ENCODE measurements at regions of chr13 and their contacts with region 1.

Region 1: GRCh38 chr13:31236211-31236786 is 36.5 kb downstream of the B3GLCT start:
- DNase-seq: peak; percentile 75
- H3K4me3 ChIP-seq: no peak overlapping the region
- H3K27ac ChIP-seq: no peak overlapping the region
- H3K4me1 ChIP-seq: no peaks in the 10 kb centered on the region
- H3K27me3 ChIP-seq: no peaks in the 10 kb centered on the region

Region 2: DNA sequence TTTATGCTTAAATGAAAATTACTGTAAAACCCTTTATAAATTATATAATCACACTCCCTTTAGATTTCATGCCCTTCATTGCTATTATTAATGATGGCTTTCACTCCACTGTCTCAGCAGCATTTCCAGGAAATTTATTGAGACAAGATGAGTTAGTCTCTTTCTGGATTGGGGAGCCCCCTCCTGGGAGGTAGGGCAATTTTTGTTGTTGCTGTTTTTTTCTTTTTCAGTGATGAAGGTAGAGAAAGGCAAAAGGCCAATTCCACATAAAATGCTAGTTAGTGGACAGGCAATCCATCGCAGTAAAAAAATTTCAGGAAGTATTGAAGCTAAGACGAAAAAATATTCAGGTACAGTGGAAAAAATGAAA is 223.7 kb before region 1 on chr13:
- in situ Hi-C with region 1: no loop called
- DNase-seq: peak; percentile 60
- H3K4me3 ChIP-seq: no peak overlapping the region
- H3K27ac ChIP-seq: no peak overlapping the region
- H3K4me1 ChIP-seq: no peaks in the 10 kb centered on the region
- H3K27me3 ChIP-seq: no peaks in the 10 kb centered on the region

Region 3: DNA sequence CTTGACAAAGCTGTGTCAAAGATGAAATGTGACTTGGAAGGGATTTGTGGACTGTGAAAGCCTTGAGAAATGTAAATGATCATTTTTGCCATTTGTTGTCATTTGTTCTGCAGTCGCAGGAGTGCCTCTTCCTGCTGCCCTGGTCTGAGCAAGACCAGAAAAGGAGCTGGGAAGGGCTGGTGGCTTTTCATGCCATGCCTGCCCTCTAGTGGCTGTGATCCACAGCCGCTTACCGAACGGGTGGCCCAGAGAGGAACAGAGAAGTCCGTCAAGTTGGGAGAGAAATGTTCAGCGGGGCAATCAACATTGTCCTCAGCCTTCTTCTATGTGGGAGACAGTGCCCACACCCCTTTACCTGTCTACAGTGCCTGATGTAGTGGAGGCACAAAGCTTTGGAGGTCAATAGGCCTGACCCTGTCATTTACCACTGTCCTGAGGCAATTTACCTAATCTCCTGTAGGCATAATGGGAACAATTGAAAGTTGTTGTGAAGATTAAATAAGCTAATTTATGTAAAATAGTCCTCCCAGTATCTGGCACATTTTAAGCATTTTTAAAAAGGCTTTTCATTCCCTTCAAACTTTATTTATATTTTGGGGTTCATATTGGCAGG is 187.9 kb after region 1 on chr13:
- in situ Hi-C with region 1: loop called (anchors 10 kb)
- DNase-seq: peak; percentile 89
- H3K4me3 ChIP-seq: peak overlapping the region; percentile 7; the same call in 1 of the 2 replicates
- H3K27ac ChIP-seq: no peak overlapping the region
- H3K4me1 ChIP-seq: no peaks in the 10 kb centered on the region
- H3K27me3 ChIP-seq: no peaks in the 10 kb centered on the region

Region 4: GRCh38 chr13:31742097-31742734 is 505.9 kb after region 1 on chr13:
- in situ Hi-C with region 1: loop called (anchors 25 kb)
- DNase-seq: peak; percentile 85
- H3K4me3 ChIP-seq: peak overlapping the region; percentile 40
- H3K27ac ChIP-seq: no peak overlapping the region
- H3K4me1 ChIP-seq: peaks cover 9% of the 10 kb centered on the region
- H3K27me3 ChIP-seq: no peaks in the 10 kb centered on the region